ENCODE measurements at regions of chr12 and their contacts with region 1.

Region 1: GRCh38 chr12:96215919-96216273 is 21.7 kb downstream of the ELK3 start:
- DNase-seq: no peak
- H3K4me3 Mint-ChIP-seq: no peak overlapping the region
- H3K27ac Mint-ChIP-seq: peak overlapping the region; percentile 28
- H3K4me1 Mint-ChIP-seq: peaks cover 51% of the 10 kb centered on the region
- H3K27me3 Mint-ChIP-seq: no peaks in the 10 kb centered on the region

Region 2: GRCh38 chr12:95986635-95987570 is 229.0 kb before region 1 on chr12:
- CTCF ChIA-PET with region 1: no interaction called
- POLR2A ChIA-PET with region 1: no interaction called
- DNase-seq: no peak
- H3K4me3 Mint-ChIP-seq: no peak overlapping the region
- H3K27ac Mint-ChIP-seq: no peak overlapping the region
- H3K4me1 Mint-ChIP-seq: no peaks in the 10 kb centered on the region
- H3K27me3 Mint-ChIP-seq: no peaks in the 10 kb centered on the region

Region 3: GRCh38 chr12:96061864-96062453 is 153.9 kb before region 1 on chr12:
- CTCF ChIA-PET with region 1: interaction called, 36 read pairs
- POLR2A ChIA-PET with region 1: interaction called, 3 read pairs
- DNase-seq: peak; percentile 83
- H3K4me3 Mint-ChIP-seq: no peak overlapping the region
- H3K27ac Mint-ChIP-seq: no peak overlapping the region
- H3K4me1 Mint-ChIP-seq: peaks cover 29% of the 10 kb centered on the region
- H3K27me3 Mint-ChIP-seq: no peaks in the 10 kb centered on the region

Region 4: DNA sequence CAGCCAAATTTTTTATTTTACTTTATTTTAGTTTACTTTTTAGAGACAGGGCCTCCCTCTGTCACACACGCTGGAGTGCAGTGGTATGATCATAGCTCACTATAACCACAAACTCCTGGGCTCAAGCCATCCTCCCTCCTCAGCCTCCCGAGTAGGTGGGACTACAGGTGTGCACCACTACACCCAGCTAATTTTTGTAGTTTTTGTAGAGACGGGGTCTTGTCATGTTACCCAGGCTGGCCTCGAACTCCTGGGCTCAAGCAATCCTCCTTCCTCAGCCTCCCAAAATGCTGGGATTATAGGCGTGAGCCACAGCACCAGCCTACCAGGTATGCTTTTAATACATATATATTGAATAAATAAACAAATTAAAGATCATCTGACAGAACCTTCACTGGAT is 147.8 kb before region 1 on chr12:
- CTCF ChIA-PET with region 1: interaction called, 17 read pairs
- POLR2A ChIA-PET with region 1: interaction called, 3 read pairs
- DNase-seq: no peak
- H3K4me3 Mint-ChIP-seq: no peak overlapping the region
- H3K27ac Mint-ChIP-seq: no peak overlapping the region
- H3K4me1 Mint-ChIP-seq: peaks cover 35% of the 10 kb centered on the region
- H3K27me3 Mint-ChIP-seq: no peaks in the 10 kb centered on the region

Region 5: GRCh38 chr12:96186607-96187301 is 29.1 kb before region 1 on chr12:
- CTCF ChIA-PET with region 1: interaction called, 10 read pairs
- POLR2A ChIA-PET with region 1: no interaction called
- DNase-seq: no peak
- H3K4me3 Mint-ChIP-seq: no peak overlapping the region
- H3K27ac Mint-ChIP-seq: no peak overlapping the region
- H3K4me1 Mint-ChIP-seq: peaks cover 23% of the 10 kb centered on the region
- H3K27me3 Mint-ChIP-seq: no peaks in the 10 kb centered on the region

Region 6: GRCh38 chr12:96516472-96517430 is 300.9 kb after region 1 on chr12:
- CTCF ChIA-PET with region 1: interaction called, 14 read pairs
- POLR2A ChIA-PET with region 1: no interaction called
- DNase-seq: peak; percentile 92
- H3K4me3 Mint-ChIP-seq: peak overlapping the region; percentile 38
- H3K27ac Mint-ChIP-seq: peak overlapping the region; percentile 82
- H3K4me1 Mint-ChIP-seq: peaks cover 20% of the 10 kb centered on the region
- H3K27me3 Mint-ChIP-seq: peaks cover 2% of the 10 kb centered on the region

Measured in activated CD4-positive, alpha-beta T cell treated with anti-CD3 and anti-CD28 coated beads, Interleukin-2, amount 10 ng/mL, durations not matched to agents 7 days and 5 days (primary cell).